GM12878 (cell line): ENCODE measurements at regions of chr6 and their contacts with region 1.

Region 1: DNA sequence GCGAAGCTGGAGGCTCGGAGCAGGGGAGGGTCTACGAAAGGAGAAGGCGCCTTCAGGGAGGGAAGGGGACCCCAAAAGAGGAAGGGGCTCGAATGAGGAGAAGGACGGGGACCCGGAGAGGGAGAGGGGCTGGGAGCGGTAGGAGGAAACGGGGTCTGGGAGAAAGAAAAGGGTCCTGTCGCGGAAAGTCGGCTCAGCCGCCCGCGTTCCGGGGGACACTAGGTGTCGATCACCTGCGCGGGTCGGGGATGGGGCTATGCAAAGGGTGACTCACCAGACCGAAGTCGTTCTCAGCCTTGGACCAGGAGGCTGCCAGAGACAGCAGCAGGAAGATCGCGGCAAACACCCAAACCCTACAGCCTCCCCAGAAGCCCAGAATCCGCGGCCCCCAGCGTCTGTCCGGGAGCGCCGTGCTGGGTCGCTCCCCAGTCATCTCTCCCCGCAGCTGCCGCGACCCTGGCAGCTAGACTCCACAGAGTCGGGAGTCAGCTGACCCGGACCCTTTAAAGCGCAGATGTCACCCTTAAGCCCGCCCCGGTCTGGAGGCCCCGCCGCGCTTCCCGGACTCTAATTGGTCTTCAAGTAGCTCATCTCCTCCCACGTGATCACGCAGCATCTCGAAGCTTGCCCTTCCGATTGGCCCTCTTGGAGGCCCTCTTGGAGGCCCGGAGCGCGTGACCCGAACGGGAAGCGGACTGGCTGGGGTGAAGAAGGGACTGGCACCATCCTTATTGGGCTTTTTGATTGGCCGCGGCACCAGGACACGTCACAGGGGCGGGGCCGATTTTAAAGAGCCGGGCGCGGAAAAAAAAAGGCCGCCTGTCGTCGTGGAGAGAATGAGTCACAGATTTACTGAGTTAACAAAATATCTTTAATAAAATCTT is at the start of gene NEU1:
- DNase-seq: peak; percentile 97
- ATAC-seq: peak; percentile 98
- H3K4me3 ChIP-seq: peak within 1 kb of the TSS; percentile 94
- H3K27ac ChIP-seq: peak within 1 kb of the TSS; percentile 63
- H3K4me1 ChIP-seq: peaks cover 11% of the 10 kb centered on the region
- H3K27me3 ChIP-seq: no peaks in the 10 kb centered on the region
- CTCF ChIP-seq: no peak
- EP300 ChIP-seq: peak in 1 of 2 experiments; percentile 13; a peak in 1 of 4 replicates
- POLR2A ChIP-seq: peak; percentile 100
- RAD21 ChIP-seq: no peak
- polyA plus RNA-seq, gene NEU1: 7.2 to 12.5 TPM

Region 2: DNA sequence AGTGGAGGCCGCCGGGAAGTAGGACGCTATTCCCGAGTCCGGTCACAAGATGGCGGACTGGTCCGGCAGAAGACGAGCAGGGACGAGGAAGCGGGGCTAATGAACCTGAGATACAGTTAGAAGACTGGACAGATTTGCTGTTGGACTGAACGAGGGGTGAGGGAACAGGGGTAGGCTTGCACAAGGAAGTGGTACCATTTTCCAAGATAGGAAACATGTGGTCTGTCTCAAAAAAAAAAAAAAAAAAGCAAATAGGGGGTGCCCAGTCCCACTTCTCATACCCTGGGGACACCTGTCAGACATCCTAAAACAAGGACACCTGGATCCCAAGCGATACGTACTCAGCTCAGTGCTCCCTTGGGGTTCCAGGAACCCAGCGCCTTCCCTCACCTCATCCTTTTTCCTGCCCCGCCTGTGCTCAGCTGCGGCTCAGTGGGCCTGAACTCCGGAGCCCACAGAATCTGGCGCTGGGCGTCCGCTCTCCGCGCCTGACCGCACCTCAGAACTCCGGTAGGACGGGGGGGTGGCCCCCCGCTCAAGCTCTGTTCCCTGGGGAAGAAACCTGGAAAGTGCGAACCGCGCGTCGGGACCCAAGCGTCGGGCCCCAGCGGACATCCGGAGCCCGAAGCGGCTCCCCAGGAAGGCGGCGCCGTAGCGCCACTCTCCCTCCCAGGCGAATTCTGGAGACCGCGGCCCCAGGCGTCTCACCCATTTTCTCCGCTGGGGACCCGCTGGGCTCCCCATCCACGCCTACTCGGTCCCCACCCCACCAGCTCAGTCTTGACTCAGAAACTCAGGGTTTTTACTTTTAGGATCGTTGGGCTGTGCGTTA is 181.5 kb before region 1 on chr6 and contains the start of gene LY6G5C:
- CTCF ChIA-PET with region 1: interaction called, 5 read pairs
- POLR2A ChIA-PET with region 1: no interaction called
- RAD21 ChIA-PET with region 1: interaction called, 3 read pairs
- SMC1A ChIA-PET with region 1: no interaction called
- in situ Hi-C with region 1: no loop called
- intact Hi-C with region 1: loop called (anchors 1 kb)
- DNase-seq: no peak
- ATAC-seq: peak; percentile 83
- H3K4me3 ChIP-seq: peak within 1 kb of the TSS; percentile 71
- H3K27ac ChIP-seq: peak within 1 kb of the TSS; percentile 15; the same call in 1 of the 2 replicates
- H3K4me1 ChIP-seq: peaks cover 6% of the 10 kb centered on the region
- H3K27me3 ChIP-seq: no peaks in the 10 kb centered on the region
- CTCF ChIP-seq: peak; percentile 74 to 91 (median 75)
- EP300 ChIP-seq: no peak
- POLR2A ChIP-seq: no peak
- RAD21 ChIP-seq: peak; percentile 93
- polyA plus RNA-seq, gene LY6G5C: 0.87 to 1.2 TPM

Region 3: GRCh38 chr6:31882344-31882743 is 19.8 kb after region 1 on chr6:
- CTCF ChIA-PET with region 1: no interaction called
- POLR2A ChIA-PET with region 1: no interaction called
- RAD21 ChIA-PET with region 1: no interaction called
- SMC1A ChIA-PET with region 1: no interaction called
- in situ Hi-C with region 1: no loop called
- intact Hi-C with region 1: no loop called
- DNase-seq: no peak
- ATAC-seq: no peak
- H3K4me3 ChIP-seq: no peak overlapping the region
- H3K27ac ChIP-seq: no peak overlapping the region
- H3K4me1 ChIP-seq: no peaks in the 10 kb centered on the region
- H3K27me3 ChIP-seq: no peaks in the 10 kb centered on the region
- CTCF ChIP-seq: no peak
- EP300 ChIP-seq: no peak
- POLR2A ChIP-seq: no peak
- RAD21 ChIP-seq: no peak

Region 4: GRCh38 chr6:31922942-31923341 is 60.4 kb after region 1 on chr6:
- CTCF ChIA-PET with region 1: interaction called, 9 read pairs
- POLR2A ChIA-PET with region 1: no interaction called
- RAD21 ChIA-PET with region 1: interaction called, 3 read pairs
- SMC1A ChIA-PET with region 1: no interaction called
- in situ Hi-C with region 1: no loop called
- intact Hi-C with region 1: loop called (anchors 2 kb)
- DNase-seq: no peak
- ATAC-seq: peak; percentile 90
- H3K4me3 ChIP-seq: no peak overlapping the region
- H3K27ac ChIP-seq: no peak overlapping the region
- H3K4me1 ChIP-seq: no peaks in the 10 kb centered on the region
- H3K27me3 ChIP-seq: no peaks in the 10 kb centered on the region
- CTCF ChIP-seq: peak; percentile 57 to 65 (median 61)
- EP300 ChIP-seq: no peak
- POLR2A ChIP-seq: no peak
- RAD21 ChIP-seq: peak; percentile 79